Activated CD8-positive, alpha-beta memory T cell treated with anti-CD3 and anti-CD28 coated beads, Interleukin-2, amount 10 ng/mL, durations not matched to agents 7 days and 5 days (primary cell): ENCODE measurements at regions of chr20 and their contacts with region 1.

Region 1: GRCh38 chr20:49534255-49534712 is 33.7 kb downstream of the PTGIS start:
- DNase-seq: peak; percentile 84
- ATAC-seq: peak; percentile 71
- H3K4me3 Mint-ChIP-seq: peak overlapping the region; percentile 40
- H3K27ac Mint-ChIP-seq: peak overlapping the region; percentile 94
- H3K4me1 Mint-ChIP-seq: peaks cover 23% of the 10 kb centered on the region
- H3K27me3 Mint-ChIP-seq: peaks cover under 1% of the 10 kb centered on the region

Region 2: GRCh38 chr20:49338061-49338460 is 196.2 kb before region 1 on chr20:
- CTCF ChIA-PET with region 1: interaction called, 37 read pairs
- DNase-seq: no peak
- ATAC-seq: no peak
- H3K4me3 Mint-ChIP-seq: no peak overlapping the region
- H3K27ac Mint-ChIP-seq: no peak overlapping the region
- H3K4me1 Mint-ChIP-seq: peaks cover 3% of the 10 kb centered on the region
- H3K27me3 Mint-ChIP-seq: peaks cover 7% of the 10 kb centered on the region